CD4-positive, alpha-beta T cell (primary cell): ENCODE measurements at regions of chr1 and their contacts with region 1.

Region 1: GRCh38 chr1:227734856-227735538 is at the starts of genes JMJD4 and SNAP47:
- DNase-seq: peak; percentile 86 to 96 (median 92)
- ATAC-seq: peak; percentile 90
- H3K4me3 ChIP-seq: peak within 1 kb of the TSS; percentile 71
- H3K4me3 Mint-ChIP-seq: peak within 1 kb of the TSS; percentile 92
- H3K27ac ChIP-seq: peak within 1 kb of the TSS in 1 of 2 donors; percentile 69
- H3K27ac Mint-ChIP-seq: peak within 1 kb of the TSS; percentile 83
- H3K4me1 ChIP-seq: peaks cover 37% of the 10 kb centered on the region
- H3K4me1 Mint-ChIP-seq: peaks cover 56% of the 10 kb centered on the region
- H3K27me3 ChIP-seq: no peaks in the 10 kb centered on the region
- H3K27me3 Mint-ChIP-seq: no peaks in the 10 kb centered on the region
- CTCF ChIP-seq: no peak
- total RNA-seq, gene JMJD4: 11.4 to 11.9 TPM
- total RNA-seq, gene SNAP47: 12.8 to 14.0 TPM

Region 2: GRCh38 chr1:227563324-227564201 is 171.4 kb before region 1 on chr1 and contains the start of gene ZNF678:
- CTCF ChIA-PET with region 1: no interaction called
- POLR2A ChIA-PET with region 1: no interaction called
- intact Hi-C with region 1: loop called in 1 of 2 experiments (anchors 5 kb)
- DNase-seq: peak; percentile 70 to 94 (median 80)
- ATAC-seq: peak; percentile 94
- H3K4me3 ChIP-seq: peak within 1 kb of the TSS; percentile 88
- H3K4me3 Mint-ChIP-seq: peak within 1 kb of the TSS; percentile 94
- H3K27ac ChIP-seq: peak within 1 kb of the TSS; percentile 52 to 78
- H3K27ac Mint-ChIP-seq: peak within 1 kb of the TSS; percentile 87
- H3K4me1 ChIP-seq: peaks cover 37% of the 10 kb centered on the region
- H3K4me1 Mint-ChIP-seq: peaks cover 45% of the 10 kb centered on the region
- H3K27me3 ChIP-seq: peaks cover 15 to 34% of the 10 kb centered on the region in 2 experiments
- H3K27me3 Mint-ChIP-seq: peaks cover 35% of the 10 kb centered on the region
- CTCF ChIP-seq: no peak
- total RNA-seq, gene ZNF678: 2.8 to 2.9 TPM

Region 3: DNA sequence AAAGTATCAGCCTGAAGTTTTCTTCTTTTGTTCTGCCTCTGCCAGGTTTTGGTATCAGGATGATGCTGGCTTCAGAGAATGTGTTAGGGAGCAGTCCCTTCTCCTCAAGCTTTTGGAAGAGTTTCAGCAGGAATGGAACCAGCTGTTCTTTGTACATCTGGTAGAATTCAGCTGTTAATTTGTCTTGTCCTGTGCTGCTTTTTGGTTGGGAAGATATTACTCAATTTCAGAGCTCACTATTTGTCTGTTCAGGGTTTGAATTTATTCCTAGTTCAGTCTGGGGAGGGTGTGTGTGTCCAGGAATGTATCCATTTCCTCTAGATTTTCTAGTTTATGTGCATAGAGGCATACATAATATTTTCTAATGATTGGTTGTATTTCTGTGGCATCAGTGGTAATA is 158.8 kb before region 1 on chr1:
- CTCF ChIA-PET with region 1: no interaction called
- POLR2A ChIA-PET with region 1: no interaction called
- intact Hi-C with region 1: no loop called
- DNase-seq: no peak
- ATAC-seq: no peak
- H3K4me3 ChIP-seq: no peak overlapping the region
- H3K4me3 Mint-ChIP-seq: no peak overlapping the region
- H3K27ac ChIP-seq: no peak overlapping the region
- H3K27ac Mint-ChIP-seq: no peak overlapping the region
- H3K4me1 ChIP-seq: no peaks in the 10 kb centered on the region
- H3K4me1 Mint-ChIP-seq: peaks cover 47% of the 10 kb centered on the region
- H3K27me3 ChIP-seq: no peaks in the 10 kb centered on the region
- H3K27me3 Mint-ChIP-seq: no peaks in the 10 kb centered on the region
- CTCF ChIP-seq: no peak

Region 4: GRCh38 chr1:227787513-227788270 is 52.7 kb after region 1 on chr1:
- CTCF ChIA-PET with region 1: no interaction called
- POLR2A ChIA-PET with region 1: interaction called, 3 read pairs
- intact Hi-C with region 1: loop called in 1 of 2 experiments (anchors 2 kb)
- DNase-seq: peak; percentile 94 to 99 (median 96)
- ATAC-seq: peak; percentile 92
- H3K4me3 ChIP-seq: peak overlapping the region; percentile 74
- H3K4me3 Mint-ChIP-seq: peak overlapping the region; percentile 89
- H3K27ac ChIP-seq: peak overlapping the region in 1 of 2 donors; percentile 11
- H3K27ac Mint-ChIP-seq: peak overlapping the region; percentile 82
- H3K4me1 ChIP-seq: peaks cover 39% of the 10 kb centered on the region
- H3K4me1 Mint-ChIP-seq: peaks cover 34% of the 10 kb centered on the region
- H3K27me3 ChIP-seq: no peaks in the 10 kb centered on the region
- H3K27me3 Mint-ChIP-seq: no peaks in the 10 kb centered on the region
- CTCF ChIP-seq: no peak